Natural killer cell (primary cell): ENCODE measurements at regions of chr4 and their contacts with region 1.

Region 1: GRCh38 chr4:42627885-42628646 is 28.8 kb downstream of the ATP8A1 start:
- DNase-seq: peak; percentile 37 to 87
- ATAC-seq: peak; percentile 82 to 88 (median 83)
- H3K4me3 ChIP-seq: no peak overlapping the region
- H3K4me3 Mint-ChIP-seq: peak overlapping the region; percentile 42
- H3K27ac ChIP-seq: peak overlapping the region; percentile 60
- H3K27ac Mint-ChIP-seq: peak overlapping the region; percentile 83 to 87
- H3K4me1 ChIP-seq: peaks cover 17% of the 10 kb centered on the region
- H3K4me1 Mint-ChIP-seq: peaks cover 62 to 69% of the 10 kb centered on the region in 2 donors
- H3K27me3 ChIP-seq: no peaks in the 10 kb centered on the region
- H3K27me3 Mint-ChIP-seq: no peaks in the 10 kb centered on the region
- CTCF ChIP-seq: no peak

Region 2: DNA sequence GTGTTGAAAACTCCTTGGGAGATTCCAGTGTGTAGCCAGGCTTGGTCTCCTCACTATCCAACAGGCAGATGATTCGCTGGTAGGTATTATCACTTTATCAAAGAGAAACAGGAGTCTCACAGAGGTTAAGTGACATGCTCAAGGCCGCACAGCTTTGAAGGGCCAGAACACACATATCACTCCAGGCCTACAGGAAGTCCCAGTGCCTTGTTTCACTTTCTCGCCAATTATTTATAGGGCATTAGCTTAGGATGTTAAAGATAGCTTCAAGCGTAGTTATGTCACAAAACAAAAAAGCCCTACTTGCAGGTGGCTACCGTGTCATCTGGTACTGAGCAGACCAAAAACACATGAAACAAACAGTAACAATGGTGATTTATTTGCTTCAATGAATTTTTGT is 15.6 kb after region 1 on chr4:
- intact Hi-C with region 1: loop called (anchors 2 kb)
- DNase-seq: peak in 1 of 2 donors; percentile 51
- ATAC-seq: peak; percentile 49 to 69 (median 52)
- H3K4me3 ChIP-seq: no peak overlapping the region
- H3K4me3 Mint-ChIP-seq: peak overlapping the region; percentile 55
- H3K27ac ChIP-seq: peak overlapping the region; percentile 58
- H3K27ac Mint-ChIP-seq: peak overlapping the region; percentile 83 to 91
- H3K4me1 ChIP-seq: peaks cover 39% of the 10 kb centered on the region
- H3K4me1 Mint-ChIP-seq: peaks cover 77 to 79% of the 10 kb centered on the region in 2 donors
- H3K27me3 ChIP-seq: no peaks in the 10 kb centered on the region
- H3K27me3 Mint-ChIP-seq: no peaks in the 10 kb centered on the region
- CTCF ChIP-seq: no peak

Region 3: GRCh38 chr4:42656944-42657792 is 29.1 kb after region 1 on chr4 and contains the start of gene ATP8A1:
- intact Hi-C with region 1: loop called (anchors 1 kb)
- DNase-seq: peak; percentile 94 to 97
- ATAC-seq: peak; percentile 91 to 98 (median 92)
- H3K4me3 ChIP-seq: peak within 1 kb of the TSS; percentile 97
- H3K4me3 Mint-ChIP-seq: peak within 1 kb of the TSS; percentile 90
- H3K27ac ChIP-seq: peak within 1 kb of the TSS; percentile 90
- H3K27ac Mint-ChIP-seq: peak within 1 kb of the TSS; percentile 74 to 95
- H3K4me1 ChIP-seq: peaks cover 25% of the 10 kb centered on the region
- H3K4me1 Mint-ChIP-seq: peaks cover 51 to 62% of the 10 kb centered on the region in 2 donors
- H3K27me3 ChIP-seq: no peaks in the 10 kb centered on the region
- H3K27me3 Mint-ChIP-seq: no peaks in the 10 kb centered on the region
- CTCF ChIP-seq: no peak
- total RNA-seq, gene ATP8A1: 84.8 to 156 (median 147) TPM

Region 4: GRCh38 chr4:42673082-42673425 is 45.0 kb after region 1 on chr4:
- intact Hi-C with region 1: loop called (anchors 5 kb)
- DNase-seq: peak in 1 of 2 donors; percentile 48
- ATAC-seq: no peak
- H3K4me3 ChIP-seq: no peak overlapping the region
- H3K4me3 Mint-ChIP-seq: peak overlapping the region; percentile 79
- H3K27ac ChIP-seq: peak overlapping the region; percentile 74
- H3K27ac Mint-ChIP-seq: peak overlapping the region; percentile 85 to 94
- H3K4me1 ChIP-seq: peaks cover 12% of the 10 kb centered on the region
- H3K4me1 Mint-ChIP-seq: peaks cover 37 to 43% of the 10 kb centered on the region in 2 donors
- H3K27me3 ChIP-seq: no peaks in the 10 kb centered on the region
- H3K27me3 Mint-ChIP-seq: no peaks in the 10 kb centered on the region
- CTCF ChIP-seq: no peak